ENCODE measurements at regions of chr18 and their contacts with region 1.

Region 1: GRCh38 chr18:62584241-62585120 is 61.7 kb downstream of the ZCCHC2 start:
- DNase-seq: peak; percentile 76 to 88
- ATAC-seq: peak; percentile 88

Region 2: DNA sequence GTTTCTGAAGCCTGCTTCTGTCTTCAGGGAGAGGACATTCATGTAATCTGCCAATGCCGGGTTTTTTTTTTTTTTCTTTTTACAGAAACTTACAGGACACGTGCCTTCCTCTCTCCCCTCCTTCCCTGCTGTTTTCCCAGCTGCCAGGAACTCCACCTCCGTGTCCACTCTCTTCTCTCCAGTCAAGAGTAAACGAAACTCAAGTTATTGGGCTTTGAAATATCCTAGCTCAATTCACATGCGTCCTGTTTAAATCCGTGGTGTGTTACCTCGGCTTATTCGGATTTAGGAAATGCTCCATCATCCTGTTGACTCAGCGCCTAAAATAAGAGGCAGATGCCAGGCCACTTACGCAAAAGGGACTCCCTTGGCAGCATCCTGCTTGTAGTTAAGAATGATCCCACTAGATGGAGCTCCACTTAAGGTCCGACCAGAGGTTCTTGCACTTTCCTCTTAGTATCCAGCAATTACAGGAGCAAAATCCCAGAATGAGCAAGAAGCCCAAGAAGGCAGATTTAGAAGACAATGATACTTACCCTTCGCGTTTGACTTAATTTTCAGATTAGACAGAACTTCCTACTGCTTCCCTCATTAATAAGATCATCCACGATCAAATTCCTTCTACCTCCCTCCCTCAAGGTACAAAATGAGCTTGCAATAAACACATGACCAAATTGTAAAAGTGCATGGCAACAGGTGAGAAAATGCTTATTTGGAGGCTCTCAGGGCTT is 158.9 kb before region 1 on chr18:
- intact Hi-C with region 1: loop called (anchors 5 to 10 kb)
- DNase-seq: peak; percentile 52 to 73
- ATAC-seq: peak; percentile 69

Region 3: GRCh38 chr18:62437235-62438017 is 147.1 kb before region 1 on chr18:
- intact Hi-C with region 1: loop called in 1 of 2 experiments (anchors 10 kb)
- DNase-seq: peak; percentile 58 to 83
- ATAC-seq: peak; percentile 30

Region 4: GRCh38 chr18:62714671-62715435 is 130.4 kb after region 1 on chr18:
- intact Hi-C with region 1: loop called in 1 of 2 experiments (anchors 10 kb)
- DNase-seq: peak; percentile 99 to 100
- ATAC-seq: peak; percentile 82

Region 5: GRCh38 chr18:62982600-62983251 is 398.2 kb after region 1 on chr18:
- intact Hi-C with region 1: loop called (anchors 5 to 10 kb)
- DNase-seq: peak in 1 of 2 donors; percentile 47
- ATAC-seq: peak; percentile 63